WTC11 (cell line): ENCODE measurements at regions of chr22 and their contacts with region 1.

Region 1: DNA sequence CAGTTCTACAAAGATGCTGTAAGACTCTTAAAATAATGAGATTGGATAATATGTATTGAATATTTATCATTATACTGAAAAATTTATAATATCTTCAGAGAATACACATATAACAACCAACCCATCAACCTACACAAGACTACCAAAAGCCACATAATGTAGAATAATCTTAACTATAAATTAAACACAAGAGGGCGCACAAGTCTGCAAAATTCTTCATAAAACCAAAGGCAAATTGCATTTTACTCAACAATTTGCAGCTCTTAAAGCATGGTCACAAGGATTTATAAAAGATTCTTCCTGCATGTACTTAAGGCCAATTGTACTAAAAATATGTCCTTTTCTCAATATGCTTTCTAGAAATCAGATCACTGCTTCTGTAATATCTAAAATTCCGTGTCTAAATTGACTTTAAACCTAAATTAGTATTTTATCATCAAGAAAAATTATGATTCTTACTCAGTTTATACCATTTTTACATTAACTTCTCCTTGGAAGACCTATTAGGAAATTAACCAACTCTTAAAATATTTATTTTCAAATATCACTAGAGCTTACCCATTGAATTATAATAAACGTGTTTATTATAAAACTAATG is 79.0 kb downstream of the TTC28 start:
- DNase-seq: no peak
- ATAC-seq: no peak
- H3K4me3 Mint-ChIP-seq: no peak overlapping the region
- H3K27ac Mint-ChIP-seq: no peak overlapping the region
- H3K4me1 Mint-ChIP-seq: 0 out of 2 replicates have a peak, but pooled peaks cover 4% of the 10 kb centered on the region
- H3K27me3 Mint-ChIP-seq: no peaks in the 10 kb centered on the region
- CTCF ChIP-seq: 0 out of 2 replicates have a peak, but pooled peaks have one; percentile 19

Region 2: DNA sequence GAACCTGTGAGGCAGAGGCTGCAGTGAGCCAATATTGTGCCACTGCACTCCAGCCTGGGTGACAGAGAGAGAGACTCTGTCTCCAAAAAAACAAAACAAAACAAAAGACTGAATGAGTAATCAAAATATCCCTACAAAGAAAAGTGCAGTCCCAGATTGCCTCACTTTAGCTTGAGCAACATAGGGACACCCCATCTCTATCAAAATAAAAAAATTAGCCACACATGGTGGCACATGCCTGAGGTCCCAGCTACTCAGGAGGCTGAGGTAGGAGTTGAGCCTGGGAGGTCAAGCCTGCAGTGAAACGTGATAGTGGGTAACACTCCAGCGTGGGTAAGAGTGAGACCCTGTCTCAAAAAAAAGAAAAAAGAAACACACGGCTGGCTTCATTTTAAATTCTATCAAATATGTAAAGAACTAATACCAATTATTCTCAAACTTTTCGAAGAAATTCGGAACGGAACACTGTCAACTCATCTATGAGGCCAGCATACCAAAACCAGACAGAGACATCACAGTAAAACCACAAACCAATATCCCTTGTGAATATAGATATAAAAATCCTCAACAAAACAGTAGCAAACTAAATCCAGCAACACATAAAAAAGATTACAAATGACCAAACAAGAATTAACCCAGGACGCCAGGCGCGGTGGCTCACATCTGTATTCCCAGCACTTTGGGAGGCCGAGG is 128.1 kb after region 1 on chr22:
- CTCF ChIA-PET with region 1: no interaction called
- POLR2A ChIA-PET with region 1: no interaction called
- DNase-seq: no peak
- ATAC-seq: no peak
- H3K4me3 Mint-ChIP-seq: no peak overlapping the region
- H3K27ac Mint-ChIP-seq: peak overlapping the region; percentile 55; the same call in 1 of the 2 replicates
- H3K4me1 Mint-ChIP-seq: peaks cover 14% of the 10 kb centered on the region
- H3K27me3 Mint-ChIP-seq: no peaks in the 10 kb centered on the region
- CTCF ChIP-seq: no peak

Region 3: GRCh38 chr22:28829358-28830181 is 228.9 kb after region 1 on chr22:
- CTCF ChIA-PET with region 1: interaction called, 22 read pairs
- POLR2A ChIA-PET with region 1: no interaction called
- DNase-seq: peak; percentile 85
- ATAC-seq: peak; percentile 91
- H3K4me3 Mint-ChIP-seq: no peak overlapping the region
- H3K27ac Mint-ChIP-seq: peak overlapping the region; percentile 30; the same call in 1 of the 2 replicates
- H3K4me1 Mint-ChIP-seq: no peaks in the 10 kb centered on the region
- H3K27me3 Mint-ChIP-seq: no peaks in the 10 kb centered on the region
- CTCF ChIP-seq: peak; percentile 94